Activated CD4-positive, alpha-beta memory T cell treated with anti-CD3 and anti-CD28 coated beads, Interleukin-2, amount 10 ng/mL, durations not matched to agents 7 days and 5 days (primary cell): ENCODE measurements at regions of chr1 and their contacts with region 1.

Region 1: GRCh38 chr1:47437447-47438164 is at the start of gene FOXD2:
- DNase-seq: peak; percentile 91
- H3K4me3 Mint-ChIP-seq: peak within 1 kb of the TSS; percentile 93
- H3K27ac Mint-ChIP-seq: peak within 1 kb of the TSS; percentile 85
- H3K4me1 Mint-ChIP-seq: peaks cover 31% of the 10 kb centered on the region
- H3K27me3 Mint-ChIP-seq: peaks cover 3% of the 10 kb centered on the region
- total RNA-seq, gene FOXD2: 0.65 to 0.68 TPM

Region 2: GRCh38 chr1:47179017-47179987 is 258.3 kb before region 1 on chr1:
- CTCF ChIA-PET with region 1: interaction called, 11 read pairs
- POLR2A ChIA-PET with region 1: no interaction called
- DNase-seq: peak; percentile 86
- H3K4me3 Mint-ChIP-seq: peak overlapping the region; percentile 74
- H3K27ac Mint-ChIP-seq: peak overlapping the region; percentile 41
- H3K4me1 Mint-ChIP-seq: peaks cover 8% of the 10 kb centered on the region
- H3K27me3 Mint-ChIP-seq: peaks cover 19% of the 10 kb centered on the region

Region 3: GRCh38 chr1:47262787-47263413 is 174.7 kb before region 1 on chr1:
- CTCF ChIA-PET with region 1: interaction called, 10 read pairs
- POLR2A ChIA-PET with region 1: no interaction called
- DNase-seq: peak; percentile 55
- H3K4me3 Mint-ChIP-seq: no peak overlapping the region
- H3K27ac Mint-ChIP-seq: no peak overlapping the region
- H3K4me1 Mint-ChIP-seq: no peaks in the 10 kb centered on the region
- H3K27me3 Mint-ChIP-seq: no peaks in the 10 kb centered on the region

Region 4: GRCh38 chr1:47333922-47334764 is 103.5 kb before region 1 on chr1:
- CTCF ChIA-PET with region 1: interaction called, 15 read pairs
- POLR2A ChIA-PET with region 1: interaction called, 22 read pairs
- DNase-seq: peak; percentile 80
- H3K4me3 Mint-ChIP-seq: no peak overlapping the region
- H3K27ac Mint-ChIP-seq: peak overlapping the region; percentile 93
- H3K4me1 Mint-ChIP-seq: peaks cover 22% of the 10 kb centered on the region
- H3K27me3 Mint-ChIP-seq: no peaks in the 10 kb centered on the region

Region 5: GRCh38 chr1:47351305-47351704 is 86.3 kb before region 1 on chr1:
- CTCF ChIA-PET with region 1: no interaction called
- POLR2A ChIA-PET with region 1: no interaction called
- DNase-seq: no peak
- H3K4me3 Mint-ChIP-seq: no peak overlapping the region
- H3K27ac Mint-ChIP-seq: no peak overlapping the region
- H3K4me1 Mint-ChIP-seq: peaks cover 10% of the 10 kb centered on the region
- H3K27me3 Mint-ChIP-seq: no peaks in the 10 kb centered on the region

Region 6: GRCh38 chr1:47399138-47399845 is 38.3 kb before region 1 on chr1:
- CTCF ChIA-PET with region 1: no interaction called
- POLR2A ChIA-PET with region 1: no interaction called
- DNase-seq: no peak
- H3K4me3 Mint-ChIP-seq: no peak overlapping the region
- H3K27ac Mint-ChIP-seq: no peak overlapping the region
- H3K4me1 Mint-ChIP-seq: no peaks in the 10 kb centered on the region
- H3K27me3 Mint-ChIP-seq: peaks cover 10% of the 10 kb centered on the region

Region 7: DNA sequence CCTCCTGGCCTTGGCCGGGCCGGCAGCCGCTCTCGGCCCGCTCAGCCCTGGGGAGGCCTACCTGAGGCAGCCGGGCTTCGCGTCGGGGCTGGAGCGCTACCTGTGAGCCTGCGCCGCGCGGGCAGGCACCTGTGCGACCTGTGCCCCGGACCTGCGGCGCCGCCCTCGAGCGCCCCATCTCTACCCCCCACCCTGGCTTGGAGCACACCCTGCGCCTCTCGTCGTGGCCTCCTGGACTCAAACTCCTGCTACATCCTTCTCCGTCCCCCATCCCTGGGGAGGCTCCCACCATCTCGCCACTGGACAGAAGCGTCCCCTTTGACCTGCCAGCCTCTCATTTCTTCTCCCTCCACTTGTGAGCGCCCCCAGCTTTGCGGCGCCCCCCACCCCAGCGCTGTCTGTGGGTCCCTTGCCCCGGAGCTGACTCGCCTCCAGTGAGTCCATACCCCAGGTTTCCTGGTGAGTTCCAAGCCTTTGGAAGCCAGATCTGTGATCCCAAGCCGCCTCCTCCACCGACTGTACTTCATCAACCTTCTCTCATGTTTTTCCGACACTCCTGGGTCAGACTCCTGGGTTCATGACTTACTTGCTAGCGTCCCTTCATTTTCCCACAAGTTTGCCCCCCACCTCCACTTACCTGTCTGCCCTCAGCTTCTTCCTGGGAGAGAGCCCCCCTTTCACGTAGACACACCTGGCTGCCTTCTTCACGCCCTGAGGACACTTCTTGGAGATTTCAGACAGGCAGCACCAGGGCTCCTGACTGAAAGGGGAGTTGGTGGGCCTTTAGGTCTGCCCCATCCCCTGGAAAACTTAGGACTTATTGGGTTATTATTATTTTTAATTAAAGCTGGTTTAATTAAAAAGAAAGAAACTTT is 20.2 kb before region 1 on chr1:
- CTCF ChIA-PET with region 1: interaction called, 32 read pairs
- POLR2A ChIA-PET with region 1: interaction called, 3 read pairs
- DNase-seq: no peak
- H3K4me3 Mint-ChIP-seq: no peak overlapping the region
- H3K27ac Mint-ChIP-seq: no peak overlapping the region
- H3K4me1 Mint-ChIP-seq: peaks cover 10% of the 10 kb centered on the region
- H3K27me3 Mint-ChIP-seq: peaks cover 45% of the 10 kb centered on the region

Region 8: DNA sequence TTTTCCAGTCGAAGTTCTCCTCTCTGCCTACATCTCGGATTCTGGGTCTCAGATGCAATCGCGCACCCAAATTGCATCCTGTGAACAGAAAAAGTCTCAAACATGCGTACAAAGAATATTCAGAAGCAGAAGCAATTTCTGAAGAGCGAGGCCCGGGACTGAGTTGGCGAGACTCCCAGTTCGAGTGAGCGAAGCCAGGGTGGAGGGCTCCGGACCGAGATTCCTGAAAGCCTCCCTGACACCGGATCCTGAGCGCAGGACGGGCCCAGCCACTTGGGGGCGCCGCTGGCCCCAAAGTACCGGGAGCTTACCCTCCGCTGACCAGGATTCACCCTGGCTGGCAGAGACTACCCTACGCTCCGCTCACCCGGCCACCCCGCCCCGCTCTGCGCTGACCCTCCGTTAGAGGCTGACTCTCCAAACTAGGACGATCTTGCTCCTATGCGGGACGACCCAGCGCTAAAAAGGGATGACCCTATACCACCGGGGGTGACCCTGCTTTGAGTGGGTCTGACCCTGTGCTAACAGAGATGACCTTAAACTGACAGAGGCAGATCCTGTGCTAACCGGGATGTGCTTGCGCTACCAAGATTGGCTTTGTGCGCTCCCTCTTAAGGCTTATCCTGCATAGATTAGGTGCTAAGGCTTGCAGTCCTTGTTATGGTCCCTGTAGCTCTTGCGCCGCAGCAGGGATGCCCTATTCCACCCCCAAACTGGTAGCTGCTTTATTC is 12.4 kb after region 1 on chr1:
- CTCF ChIA-PET with region 1: interaction called, 40 read pairs
- POLR2A ChIA-PET with region 1: interaction called, 17 read pairs
- DNase-seq: no peak
- H3K4me3 Mint-ChIP-seq: no peak overlapping the region
- H3K27ac Mint-ChIP-seq: no peak overlapping the region
- H3K4me1 Mint-ChIP-seq: peaks cover 7% of the 10 kb centered on the region
- H3K27me3 Mint-ChIP-seq: peaks cover 44% of the 10 kb centered on the region

Region 9: GRCh38 chr1:47487850-47488450 is 50.3 kb after region 1 on chr1:
- CTCF ChIA-PET with region 1: no interaction called
- POLR2A ChIA-PET with region 1: no interaction called
- DNase-seq: no peak
- H3K4me3 Mint-ChIP-seq: no peak overlapping the region
- H3K27ac Mint-ChIP-seq: no peak overlapping the region
- H3K4me1 Mint-ChIP-seq: no peaks in the 10 kb centered on the region
- H3K27me3 Mint-ChIP-seq: peaks cover 12% of the 10 kb centered on the region

Region 10: GRCh38 chr1:47725992-47726855 is 288.6 kb after region 1 on chr1:
- CTCF ChIA-PET with region 1: interaction called, 52 read pairs
- POLR2A ChIA-PET with region 1: no interaction called
- DNase-seq: peak; percentile 68
- H3K4me3 Mint-ChIP-seq: no peak overlapping the region
- H3K27ac Mint-ChIP-seq: no peak overlapping the region
- H3K4me1 Mint-ChIP-seq: peaks cover 3% of the 10 kb centered on the region
- H3K27me3 Mint-ChIP-seq: peaks cover 55% of the 10 kb centered on the region